ENCODE measurements at regions of chr14 and their contacts with region 1.

Region 1: DNA sequence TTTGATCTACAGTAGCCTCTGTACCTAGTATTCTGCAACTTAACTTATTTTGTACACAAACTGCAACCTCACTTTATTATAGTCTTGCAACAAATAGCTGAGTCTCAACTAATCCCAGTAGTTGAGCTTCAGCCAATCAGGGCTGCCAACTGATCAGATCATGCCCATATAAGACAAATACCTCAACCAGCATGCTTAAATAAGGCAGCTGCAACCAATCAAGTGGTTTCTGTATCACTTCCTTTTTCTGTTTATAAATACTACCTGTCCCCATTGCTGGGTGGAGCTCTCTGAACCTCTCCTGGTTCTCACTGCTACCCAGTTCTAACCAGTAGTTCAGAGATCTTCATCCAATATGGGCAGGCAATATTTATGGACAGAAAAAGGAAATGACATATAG is 248.5 kb upstream of the FBXO33 start:
- DNase-seq: no peak
- H3K4me3 Mint-ChIP-seq: no peak overlapping the region
- H3K27ac Mint-ChIP-seq: no peak overlapping the region
- H3K4me1 Mint-ChIP-seq: no peaks in the 10 kb centered on the region
- H3K27me3 Mint-ChIP-seq: no peaks in the 10 kb centered on the region

Region 2: DNA sequence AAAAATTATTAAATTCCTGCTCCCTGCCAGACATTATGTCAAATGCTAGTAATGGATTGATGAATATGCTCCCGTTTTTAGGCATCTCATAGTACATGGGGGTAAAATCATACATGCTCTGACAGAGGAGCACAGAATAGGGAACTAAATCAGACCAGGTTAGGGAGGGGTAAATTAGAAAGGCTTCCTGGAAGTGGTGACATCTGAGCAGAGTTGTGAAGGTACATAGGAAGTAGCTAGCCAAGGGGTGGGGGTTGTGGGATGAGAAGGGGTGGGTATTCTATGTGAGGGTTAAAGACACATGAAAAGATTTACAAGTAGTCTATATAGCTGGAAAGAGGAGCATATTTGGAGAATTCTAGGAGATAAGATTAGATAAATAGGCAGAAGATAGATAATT is 76.8 kb before region 1 on chr14:
- intact Hi-C with region 1: loop called (anchors 10 kb)
- DNase-seq: no peak
- H3K4me3 Mint-ChIP-seq: no peak overlapping the region
- H3K27ac Mint-ChIP-seq: no peak overlapping the region
- H3K4me1 Mint-ChIP-seq: no peaks in the 10 kb centered on the region
- H3K27me3 Mint-ChIP-seq: no peaks in the 10 kb centered on the region

Region 3: DNA sequence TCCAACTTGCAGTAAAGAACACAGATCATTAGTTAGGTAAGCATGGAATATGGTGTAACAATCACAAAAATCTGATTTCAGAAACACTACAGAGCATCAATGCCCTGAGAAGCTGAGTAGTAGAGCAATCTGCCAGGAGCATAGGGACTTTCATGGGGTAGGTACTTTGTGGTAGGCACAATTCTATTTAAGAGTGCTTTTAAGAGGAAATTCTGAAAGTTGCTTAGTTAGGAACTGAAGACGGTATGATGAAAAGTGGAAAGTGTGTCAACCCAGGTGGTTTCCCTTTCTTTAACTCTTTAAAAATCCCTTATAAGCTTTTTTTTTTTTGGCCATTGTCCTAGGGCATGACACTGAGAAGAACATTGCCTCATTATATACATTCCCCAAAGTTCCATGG is 287.1 kb after region 1 on chr14:
- intact Hi-C with region 1: no loop called
- DNase-seq: no peak
- H3K4me3 Mint-ChIP-seq: no peak overlapping the region
- H3K27ac Mint-ChIP-seq: no peak overlapping the region
- H3K4me1 Mint-ChIP-seq: no peaks in the 10 kb centered on the region
- H3K27me3 Mint-ChIP-seq: no peaks in the 10 kb centered on the region